ENCODE measurements at regions of chr6 and their contacts with region 1.

Region 1: DNA sequence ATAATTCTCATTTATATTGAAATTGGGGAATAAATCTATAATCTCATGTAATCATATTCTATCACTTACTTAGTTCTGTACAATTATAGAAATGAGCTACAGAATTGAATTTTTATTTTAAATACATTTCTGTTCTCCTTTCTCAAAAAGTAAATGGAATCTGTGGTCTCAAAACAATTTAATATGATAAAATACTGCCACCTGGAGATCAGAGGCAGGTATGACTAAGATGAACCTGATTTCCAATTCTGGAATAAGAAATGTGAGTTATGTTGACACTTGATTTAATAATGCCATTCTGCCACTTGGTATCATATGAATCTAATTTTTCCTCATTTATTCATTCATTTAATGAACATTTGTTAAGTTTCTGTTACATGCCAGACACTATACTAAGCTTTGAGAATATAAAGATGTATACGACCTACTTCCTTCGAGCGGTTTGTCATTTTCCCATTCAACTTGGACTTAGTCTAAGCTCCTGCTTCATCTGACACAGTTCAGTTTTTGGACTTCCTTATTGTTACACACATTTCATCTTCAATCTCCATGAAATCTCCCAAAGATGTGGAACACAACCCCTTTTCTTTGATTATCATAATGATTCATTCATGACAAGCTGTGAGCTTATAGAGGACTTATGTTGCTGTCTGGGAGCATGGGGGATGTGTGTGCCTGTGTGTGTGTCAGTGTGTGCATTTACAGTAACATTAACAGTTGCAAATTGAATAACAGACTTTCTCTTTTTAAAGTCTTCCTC is 7.5 kb upstream of the CCDC28A start:
- DNase-seq: peak; percentile 64
- H3K4me3 ChIP-seq: no peak overlapping the region
- H3K27ac ChIP-seq: no peak overlapping the region
- H3K4me1 ChIP-seq: peaks cover 32% of the 10 kb centered on the region
- H3K27me3 ChIP-seq: no peaks in the 10 kb centered on the region
- CTCF ChIP-seq: peak; percentile 22 to 40
- POLR2A ChIP-seq: no peak

Region 2: DNA sequence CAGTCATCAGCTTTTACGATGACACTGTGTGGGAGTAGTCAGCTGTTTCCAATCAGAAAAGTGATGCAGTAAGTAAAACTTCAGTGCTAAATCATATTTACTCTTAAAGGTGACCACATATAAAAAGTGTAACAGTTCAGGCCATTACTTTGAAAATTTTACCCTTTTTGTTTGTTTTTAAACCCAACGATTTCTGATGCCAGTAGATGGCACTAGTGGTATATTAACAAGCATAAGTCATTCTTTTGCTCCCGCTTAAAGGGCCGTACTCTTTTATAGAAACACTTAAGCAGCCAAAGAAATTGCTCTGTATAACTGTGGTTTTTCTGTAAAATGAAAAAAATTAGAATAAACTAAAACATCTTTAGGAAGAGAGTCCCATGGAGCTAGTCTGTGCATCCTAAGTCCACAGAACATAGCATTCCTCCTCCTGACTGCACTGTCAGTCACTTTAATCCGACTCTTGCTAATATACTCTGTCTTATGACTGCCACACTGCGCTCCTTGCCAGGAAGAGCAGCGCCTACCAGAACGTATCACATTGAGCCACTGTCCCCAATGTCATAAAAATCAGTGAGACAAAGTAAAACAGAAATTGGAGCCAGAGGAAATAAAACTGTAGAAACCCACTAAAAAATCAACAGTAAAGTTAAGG is 337.0 kb before region 1 on chr6:
- CTCF ChIA-PET with region 1: interaction called, 6 read pairs
- POLR2A ChIA-PET with region 1: no interaction called
- dilution Hi-C with region 1: no loop called
- intact Hi-C with region 1: loop called (anchors 1 kb)
- DNase-seq: peak; percentile 62
- H3K4me3 ChIP-seq: no peak overlapping the region
- H3K27ac ChIP-seq: no peak overlapping the region
- H3K4me1 ChIP-seq: no peaks in the 10 kb centered on the region
- H3K27me3 ChIP-seq: no peaks in the 10 kb centered on the region
- CTCF ChIP-seq: peak; percentile 36 to 41
- POLR2A ChIP-seq: no peak

Region 3: DNA sequence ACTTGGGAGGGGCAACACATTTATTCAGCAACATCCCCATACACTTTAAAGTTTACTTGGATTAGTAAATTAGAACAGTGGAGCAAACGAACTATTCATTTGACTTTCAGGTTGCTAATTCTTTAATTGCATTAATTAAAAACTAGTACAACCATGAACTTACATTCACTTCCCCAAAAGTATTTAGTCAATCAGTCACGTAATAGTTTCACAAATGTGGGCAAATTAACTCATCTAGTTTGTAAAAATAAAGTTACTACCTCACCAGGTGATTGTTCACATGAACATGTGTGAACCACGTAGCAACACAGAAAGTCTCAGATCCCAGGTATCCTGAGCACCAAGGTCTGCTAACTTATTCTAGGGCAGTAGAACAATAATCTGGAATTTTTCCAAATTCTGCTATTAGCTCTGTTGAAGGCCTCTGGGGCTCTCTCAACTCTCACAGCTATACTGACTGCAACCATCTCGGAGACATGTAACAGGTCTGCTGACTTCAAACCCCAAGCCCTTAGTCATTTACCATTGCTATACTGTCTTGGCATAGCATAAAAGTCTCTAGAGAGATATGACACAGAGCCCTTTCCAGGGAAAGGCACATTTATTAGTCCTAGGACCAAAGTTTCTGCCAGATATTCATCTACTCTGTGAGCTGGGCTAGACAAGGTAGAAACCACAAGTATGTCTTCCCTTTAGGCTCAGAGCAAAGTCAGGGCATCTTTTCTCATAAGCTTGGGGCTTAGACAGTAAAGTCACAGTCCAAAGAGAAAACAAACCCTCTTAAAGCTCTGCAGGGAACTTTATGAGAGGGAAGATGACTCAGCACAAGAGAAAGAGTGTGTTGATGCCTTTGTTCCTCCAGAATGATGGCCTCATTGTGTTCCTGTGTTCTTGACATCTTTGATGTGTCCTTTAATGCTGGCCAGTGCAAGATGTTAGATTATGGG is 43.4 kb before region 1 on chr6:
- CTCF ChIA-PET with region 1: interaction called, 6 read pairs
- POLR2A ChIA-PET with region 1: no interaction called
- dilution Hi-C with region 1: no loop called
- intact Hi-C with region 1: loop called (anchors 2 kb)
- DNase-seq: peak; percentile 69
- H3K4me3 ChIP-seq: no peak overlapping the region
- H3K27ac ChIP-seq: peak overlapping the region; percentile 62
- H3K4me1 ChIP-seq: peaks cover 38% of the 10 kb centered on the region
- H3K27me3 ChIP-seq: no peaks in the 10 kb centered on the region
- CTCF ChIP-seq: no peak
- POLR2A ChIP-seq: no peak

Region 4: GRCh38 chr6:138882369-138883017 is 116.4 kb after region 1 on chr6:
- CTCF ChIA-PET with region 1: no interaction called
- POLR2A ChIA-PET with region 1: no interaction called
- dilution Hi-C with region 1: no loop called
- intact Hi-C with region 1: no loop called
- DNase-seq: no peak
- H3K4me3 ChIP-seq: no peak overlapping the region
- H3K27ac ChIP-seq: no peak overlapping the region
- H3K4me1 ChIP-seq: no peaks in the 10 kb centered on the region
- H3K27me3 ChIP-seq: peaks cover 0 to 1% of the 10 kb centered on the region in 2 experiments
- CTCF ChIP-seq: no peak
- POLR2A ChIP-seq: no peak

Measured in endothelial cell of umbilical vein (primary cell).